CD4-positive, alpha-beta T cell (primary cell): ENCODE measurements at regions of chr20 and their contacts with region 1.

Region 1: GRCh38 chr20:64079273-64080012 is at the start of gene RGS19:
- DNase-seq: peak in 13 of 14 experiments; percentile 42 to 87 (median 68)
- ATAC-seq: peak; percentile 33
- H3K4me3 ChIP-seq: peak within 1 kb of the TSS; percentile 93
- H3K4me3 Mint-ChIP-seq: peak within 1 kb of the TSS; percentile 91
- H3K27ac ChIP-seq: peak within 1 kb of the TSS; percentile 61 to 80
- H3K27ac Mint-ChIP-seq: peak within 1 kb of the TSS; percentile 86
- H3K4me1 ChIP-seq: peaks cover 63% of the 10 kb centered on the region
- H3K4me1 Mint-ChIP-seq: peaks cover 46% of the 10 kb centered on the region
- H3K27me3 ChIP-seq: no peaks in the 10 kb centered on the region
- H3K27me3 Mint-ChIP-seq: no peaks in the 10 kb centered on the region
- CTCF ChIP-seq: no peak
- total RNA-seq, gene RGS19: 9.7 to 14.8 TPM

Region 2: DNA sequence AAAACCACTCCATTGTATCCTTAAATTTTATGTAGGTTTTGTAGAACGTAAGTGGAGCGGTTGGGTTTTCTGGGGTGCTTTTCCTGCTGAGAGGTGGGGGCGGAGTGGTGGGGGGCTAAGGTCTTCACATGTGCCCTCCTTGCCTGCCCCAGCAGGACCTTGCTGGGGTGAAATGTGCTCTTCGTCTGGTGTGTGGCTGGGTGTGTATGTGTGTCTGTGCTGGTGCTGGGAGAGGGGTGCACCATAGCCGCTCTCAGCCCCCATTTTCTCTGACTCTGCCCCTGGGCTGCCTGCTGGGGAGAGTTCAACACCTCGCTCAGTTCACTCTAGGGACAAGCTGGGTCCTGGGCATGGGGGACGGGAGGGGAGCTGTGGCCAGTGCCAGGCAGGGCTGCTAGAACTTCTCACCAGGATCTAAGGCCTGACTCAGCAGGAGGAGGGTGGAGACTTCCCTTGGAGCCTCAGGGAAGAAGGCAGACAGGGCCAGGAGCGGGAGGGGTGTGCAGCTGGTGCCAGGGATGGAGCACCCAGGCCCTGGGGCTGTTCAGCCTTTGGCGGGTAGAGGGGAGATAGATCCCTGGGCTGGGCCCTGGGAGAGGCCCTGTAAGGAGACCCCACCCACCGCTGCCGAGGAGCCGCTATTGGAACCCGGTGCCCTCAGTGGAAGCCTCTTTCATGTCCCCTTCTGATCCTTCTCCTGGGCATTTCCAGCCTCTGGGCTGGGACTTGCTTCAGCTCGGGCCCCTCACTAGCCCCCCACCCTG is 34.8 kb before region 1 on chr20:
- CTCF ChIA-PET with region 1: interaction called, 12 read pairs
- POLR2A ChIA-PET with region 1: interaction called, 30 read pairs
- intact Hi-C with region 1: loop called (anchors 2 to 5 kb)
- DNase-seq: no peak
- ATAC-seq: no peak
- H3K4me3 ChIP-seq: no peak overlapping the region
- H3K4me3 Mint-ChIP-seq: peak overlapping the region; percentile 83
- H3K27ac ChIP-seq: no peak overlapping the region
- H3K27ac Mint-ChIP-seq: peak overlapping the region; percentile 79
- H3K4me1 ChIP-seq: peaks cover 36% of the 10 kb centered on the region
- H3K4me1 Mint-ChIP-seq: peaks cover 42% of the 10 kb centered on the region
- H3K27me3 ChIP-seq: peaks cover 2 to 9% of the 10 kb centered on the region in 2 experiments
- H3K27me3 Mint-ChIP-seq: peaks cover 17% of the 10 kb centered on the region
- CTCF ChIP-seq: no peak

Region 3: GRCh38 chr20:64255361-64256281 is 176.2 kb after region 1 on chr20 and contains the start of gene PCMTD2:
- CTCF ChIA-PET with region 1: interaction called, 3 read pairs
- POLR2A ChIA-PET with region 1: interaction called, 8 read pairs
- intact Hi-C with region 1: loop called in 1 of 2 experiments (anchors 5 kb)
- DNase-seq: peak; percentile 60 to 94 (median 84)
- ATAC-seq: peak; percentile 86
- H3K4me3 ChIP-seq: peak within 1 kb of the TSS; percentile 90
- H3K4me3 Mint-ChIP-seq: peak within 1 kb of the TSS; percentile 94
- H3K27ac ChIP-seq: peak within 1 kb of the TSS; percentile 74 to 77
- H3K27ac Mint-ChIP-seq: peak within 1 kb of the TSS; percentile 94
- H3K4me1 ChIP-seq: peaks cover 34% of the 10 kb centered on the region
- H3K4me1 Mint-ChIP-seq: peaks cover 54% of the 10 kb centered on the region
- H3K27me3 ChIP-seq: no peaks in the 10 kb centered on the region
- H3K27me3 Mint-ChIP-seq: peaks cover 5% of the 10 kb centered on the region
- CTCF ChIP-seq: no peak
- total RNA-seq, gene PCMTD2: 68.5 to 76.5 TPM